ENCODE measurements at regions of chr19 and their contacts with region 1.

Region 1: DNA sequence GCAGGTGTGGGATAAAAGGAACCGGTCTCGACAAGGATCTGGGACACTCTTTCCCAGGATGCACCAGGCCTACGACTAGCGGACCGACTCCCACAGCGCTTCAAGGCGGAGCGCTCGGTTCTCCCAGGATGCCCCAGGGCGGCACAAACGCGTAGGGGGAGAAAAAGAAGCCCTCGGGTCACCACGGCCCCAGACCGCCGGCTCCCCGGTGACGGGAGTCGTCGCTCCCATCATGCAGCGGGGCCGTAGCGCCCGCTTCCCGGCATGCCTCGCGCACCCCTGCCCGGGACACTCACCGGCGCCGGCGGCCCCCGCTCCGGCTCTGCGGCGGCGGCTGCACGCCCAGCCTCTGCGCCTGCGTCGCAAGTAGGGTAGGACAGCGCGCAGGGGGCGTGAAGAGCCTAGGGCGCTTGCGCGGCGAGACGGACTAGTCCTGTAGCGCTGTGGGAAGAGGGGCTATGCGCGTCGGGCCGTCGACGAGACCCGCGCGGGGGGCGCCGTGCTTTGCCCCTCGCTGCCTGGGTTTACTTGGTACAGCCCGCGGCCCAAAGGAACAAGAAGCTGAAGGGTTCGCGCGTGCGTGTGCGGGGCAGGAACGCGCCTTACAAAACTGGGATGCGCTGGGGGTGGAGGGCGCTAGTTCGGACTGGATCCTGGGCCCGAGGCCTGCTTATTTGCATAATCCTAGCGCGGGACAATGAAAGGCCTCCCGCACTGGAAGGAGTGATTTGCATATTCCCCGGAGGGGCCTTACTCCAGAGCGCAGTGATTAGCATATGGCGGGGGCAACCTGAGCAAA is at the start of gene ZNF428:
- DNase-seq: peak; percentile 38
- H3K4me3 ChIP-seq: peak within 1 kb of the TSS; percentile 86
- H3K27me3 ChIP-seq: no peaks in the 10 kb centered on the region
- CTCF ChIP-seq: no peak
- polyA plus RNA-seq, gene ZNF428: 24.4 and 34.0 TPM in 2 replicates

Region 2: DNA sequence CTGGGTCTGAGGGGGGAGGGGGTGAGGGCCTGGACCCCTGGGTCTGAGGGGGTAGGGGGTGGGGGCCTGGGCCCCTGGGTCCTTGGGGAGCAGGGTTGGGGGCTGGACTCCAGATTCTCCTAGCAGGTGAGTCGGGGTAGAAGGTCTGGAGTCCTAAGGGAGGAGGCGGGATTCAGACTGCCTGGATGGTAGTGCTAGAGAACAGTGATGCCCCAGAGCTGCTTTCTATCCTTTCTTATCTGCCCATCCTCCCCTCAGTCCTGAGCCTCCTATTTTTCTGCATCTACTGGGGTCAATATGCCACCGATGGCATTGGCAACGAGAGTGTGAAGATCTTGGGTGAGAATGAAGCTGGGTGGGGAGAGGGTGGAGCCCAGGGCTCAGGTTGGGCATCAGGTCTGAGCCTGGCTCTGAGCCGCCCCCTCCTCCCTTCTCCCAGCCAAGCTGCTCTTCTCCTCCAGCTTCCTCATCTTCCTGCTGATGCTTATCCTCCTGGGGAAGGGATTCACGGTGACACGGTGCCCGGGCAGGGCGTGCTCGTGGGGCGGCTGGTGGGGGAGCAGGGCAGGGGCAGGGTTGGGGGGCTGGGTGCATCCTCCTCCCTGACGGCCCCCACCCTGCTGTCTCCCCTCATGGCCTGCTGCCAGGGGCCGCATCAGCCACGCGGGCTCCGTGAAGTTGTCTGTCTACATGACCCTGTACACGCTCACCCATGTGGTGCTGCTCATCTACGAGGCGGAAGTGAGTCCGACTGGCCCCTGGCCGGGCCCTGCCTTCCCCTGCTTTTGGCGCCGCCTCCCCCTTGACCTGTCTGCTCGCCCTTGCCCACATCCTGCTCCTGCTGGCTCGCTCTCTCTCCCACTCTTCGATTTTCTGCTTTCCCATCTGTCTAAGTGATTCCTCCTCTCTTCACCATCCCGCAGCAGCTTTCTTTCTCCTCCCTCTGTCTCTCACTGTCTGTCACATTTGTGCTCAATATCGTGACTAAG is 1302.9 kb before region 1 on chr19:
- CTCF ChIA-PET with region 1: no interaction called
- POLR2A ChIA-PET with region 1: no interaction called
- DNase-seq: no peak
- H3K4me3 ChIP-seq: no peak overlapping the region
- H3K27me3 ChIP-seq: peaks cover 11% of the 10 kb centered on the region
- CTCF ChIP-seq: no peak

Region 3: GRCh38 chr19:43605875-43606568 is 13.4 kb before region 1 on chr19:
- CTCF ChIA-PET with region 1: interaction called, 5 read pairs
- POLR2A ChIA-PET with region 1: interaction called, 11 read pairs
- DNase-seq: no peak
- H3K4me3 ChIP-seq: no peak overlapping the region
- H3K27me3 ChIP-seq: no peaks in the 10 kb centered on the region
- CTCF ChIP-seq: no peak

Region 4: GRCh38 chr19:43723588-43723987 is 104.1 kb after region 1 on chr19:
- CTCF ChIA-PET with region 1: no interaction called
- POLR2A ChIA-PET with region 1: no interaction called
- DNase-seq: no peak
- H3K4me3 ChIP-seq: no peak overlapping the region
- H3K27me3 ChIP-seq: no peaks in the 10 kb centered on the region
- CTCF ChIP-seq: peak; percentile 26